GM12878 (cell line): ENCODE measurements at regions of chr12 and their contacts with region 1.

Region 1: GRCh38 chr12:7933255-7933729 is 2.7 kb downstream of the SLC2A3 start:
- DNase-seq: peak; percentile 79
- ATAC-seq: peak; percentile 92
- H3K4me3 ChIP-seq: peak overlapping the region; percentile 83
- H3K27ac ChIP-seq: peak overlapping the region; percentile 86
- H3K4me1 ChIP-seq: no peaks in the 10 kb centered on the region
- H3K27me3 ChIP-seq: no peaks in the 10 kb centered on the region
- CTCF ChIP-seq: peak; percentile 61 to 77 (median 70); a peak in 5 of 6 replicates
- EP300 ChIP-seq: no peak
- POLR2A ChIP-seq: no peak
- RAD21 ChIP-seq: peak; percentile 79

Region 2: DNA sequence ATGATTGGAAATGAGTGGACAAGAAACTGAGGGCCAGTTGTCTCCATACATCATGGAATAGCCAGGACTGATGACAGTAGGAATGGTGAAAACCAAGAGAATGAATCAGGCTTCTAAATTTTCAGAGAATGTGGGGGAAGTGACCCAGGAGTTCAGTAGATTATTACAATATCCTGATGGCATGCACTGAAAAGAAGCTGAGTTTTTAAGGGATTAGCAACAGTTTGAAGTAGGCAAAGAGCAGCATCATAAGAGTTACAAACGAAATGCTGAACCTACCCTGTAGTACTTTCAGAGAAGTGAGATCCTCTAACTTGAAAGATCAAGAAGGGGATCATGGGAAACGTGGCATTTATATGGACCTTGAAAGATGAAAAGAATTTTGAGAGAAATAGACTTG is 73.7 kb before region 1 on chr12:
- CTCF ChIA-PET with region 1: interaction called, 16 read pairs
- POLR2A ChIA-PET with region 1: interaction called, 3 read pairs
- RAD21 ChIA-PET with region 1: interaction called, 17 read pairs
- SMC1A ChIA-PET with region 1: interaction called, 5 read pairs
- in situ Hi-C with region 1: no loop called
- intact Hi-C with region 1: loop called (anchors 1 kb)
- DNase-seq: no peak
- ATAC-seq: no peak; the same call in 1 of the 3 replicates
- H3K4me3 ChIP-seq: no peak overlapping the region
- H3K27ac ChIP-seq: no peak overlapping the region
- H3K4me1 ChIP-seq: no peaks in the 10 kb centered on the region; the same call in 1 of the 2 replicates
- H3K27me3 ChIP-seq: no peaks in the 10 kb centered on the region
- CTCF ChIP-seq: no peak
- EP300 ChIP-seq: no peak
- POLR2A ChIP-seq: no peak
- RAD21 ChIP-seq: no peak

Region 3: GRCh38 chr12:7917392-7918267 is 15.7 kb before region 1 on chr12:
- CTCF ChIA-PET with region 1: interaction called, 31 read pairs
- POLR2A ChIA-PET with region 1: no interaction called
- RAD21 ChIA-PET with region 1: interaction called, 7 read pairs
- SMC1A ChIA-PET with region 1: interaction called, 4 read pairs
- in situ Hi-C with region 1: no loop called
- intact Hi-C with region 1: no loop called
- DNase-seq: no peak
- ATAC-seq: no peak
- H3K4me3 ChIP-seq: no peak overlapping the region
- H3K27ac ChIP-seq: no peak overlapping the region
- H3K4me1 ChIP-seq: no peaks in the 10 kb centered on the region
- H3K27me3 ChIP-seq: no peaks in the 10 kb centered on the region
- CTCF ChIP-seq: no peak
- EP300 ChIP-seq: no peak
- POLR2A ChIP-seq: no peak
- RAD21 ChIP-seq: no peak

Region 4: DNA sequence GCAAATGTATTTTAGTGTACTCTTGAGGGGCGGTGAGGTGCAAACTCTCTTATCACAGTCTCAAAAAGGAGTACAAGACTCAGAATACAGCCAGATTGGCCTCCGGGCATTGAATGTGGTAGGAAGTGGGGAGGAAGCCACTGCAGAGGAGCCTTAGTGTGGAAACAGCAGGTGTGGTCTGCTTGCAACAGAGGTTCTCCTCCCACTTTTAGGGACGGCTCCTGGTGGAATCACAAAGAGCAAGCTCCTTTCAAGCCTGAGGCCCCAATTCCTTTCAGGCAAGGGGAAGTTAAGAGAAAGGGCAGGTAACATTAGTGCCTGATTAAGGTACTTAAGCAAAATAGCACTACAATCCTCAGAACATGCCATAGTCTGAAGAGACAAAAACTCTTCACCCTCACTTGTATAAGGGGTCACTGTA is 26.4 kb after region 1 on chr12:
- CTCF ChIA-PET with region 1: interaction called, 191 read pairs
- POLR2A ChIA-PET with region 1: interaction called, 180 read pairs
- RAD21 ChIA-PET with region 1: interaction called, 169 read pairs
- SMC1A ChIA-PET with region 1: interaction called, 215 read pairs
- in situ Hi-C with region 1: no loop called
- intact Hi-C with region 1: loop called (anchors 1 kb)
- DNase-seq: peak; percentile 70
- ATAC-seq: peak; percentile 53
- H3K4me3 ChIP-seq: peak overlapping the region; percentile 87
- H3K27ac ChIP-seq: peak overlapping the region; percentile 71
- H3K4me1 ChIP-seq: peaks cover 18% of the 10 kb centered on the region
- H3K27me3 ChIP-seq: no peaks in the 10 kb centered on the region
- CTCF ChIP-seq: no peak
- EP300 ChIP-seq: peak in 1 of 2 experiments; percentile 30; a peak in 1 of 4 replicates
- POLR2A ChIP-seq: no peak
- RAD21 ChIP-seq: no peak

Region 5: DNA sequence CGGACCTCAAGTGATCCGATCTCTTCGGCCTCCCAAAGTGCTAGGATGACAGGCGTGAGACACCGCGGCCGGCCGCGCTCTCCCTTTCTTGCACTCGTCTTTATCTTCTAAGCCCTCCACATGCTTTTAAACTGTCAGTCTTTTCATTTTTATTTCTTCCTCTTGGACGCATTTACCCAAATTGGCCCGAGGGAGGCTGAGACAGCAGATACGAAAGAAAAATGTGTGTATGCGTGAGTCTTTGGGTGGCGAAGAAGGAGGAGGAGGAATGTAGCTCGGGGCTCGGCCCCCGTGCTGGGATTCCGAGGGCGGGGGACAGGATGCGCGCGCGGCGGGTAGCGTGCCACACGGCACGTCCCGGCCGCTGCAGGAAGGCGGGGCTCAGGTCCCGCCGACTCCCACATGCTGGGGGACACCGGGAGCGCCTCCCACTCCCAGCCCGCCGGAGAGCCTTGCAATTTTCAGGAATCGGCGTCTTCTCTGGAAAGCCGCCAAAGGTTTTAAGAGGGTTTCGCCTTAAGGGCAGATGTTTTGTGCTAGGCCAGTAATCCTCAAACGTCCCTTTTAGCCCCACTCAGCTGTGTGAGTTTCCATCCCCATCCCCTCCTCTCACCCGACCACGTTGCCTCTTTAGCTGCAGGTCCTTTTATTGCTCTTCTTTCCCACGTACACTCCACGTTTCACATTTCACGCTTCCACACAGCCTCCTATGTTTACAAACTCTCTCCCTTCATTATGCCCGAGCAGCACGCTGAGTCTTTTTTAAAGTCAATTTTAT is 37.4 kb after region 1 on chr12:
- CTCF ChIA-PET with region 1: interaction called, 191 read pairs
- POLR2A ChIA-PET with region 1: interaction called, 31 read pairs
- RAD21 ChIA-PET with region 1: interaction called, 15 read pairs
- SMC1A ChIA-PET with region 1: interaction called, 215 read pairs
- in situ Hi-C with region 1: loop called (anchors 5 kb)
- intact Hi-C with region 1: loop called (anchors 1 kb)
- DNase-seq: peak; percentile 73
- ATAC-seq: peak; percentile 98
- H3K4me3 ChIP-seq: peak overlapping the region; percentile 92
- H3K27ac ChIP-seq: peak overlapping the region; percentile 75
- H3K4me1 ChIP-seq: peaks cover 12% of the 10 kb centered on the region
- H3K27me3 ChIP-seq: no peaks in the 10 kb centered on the region
- CTCF ChIP-seq: no peak
- EP300 ChIP-seq: peak in 1 of 2 experiments; percentile 25; a peak in 2 of 4 replicates
- POLR2A ChIP-seq: peak; percentile 67
- RAD21 ChIP-seq: no peak

Region 6: DNA sequence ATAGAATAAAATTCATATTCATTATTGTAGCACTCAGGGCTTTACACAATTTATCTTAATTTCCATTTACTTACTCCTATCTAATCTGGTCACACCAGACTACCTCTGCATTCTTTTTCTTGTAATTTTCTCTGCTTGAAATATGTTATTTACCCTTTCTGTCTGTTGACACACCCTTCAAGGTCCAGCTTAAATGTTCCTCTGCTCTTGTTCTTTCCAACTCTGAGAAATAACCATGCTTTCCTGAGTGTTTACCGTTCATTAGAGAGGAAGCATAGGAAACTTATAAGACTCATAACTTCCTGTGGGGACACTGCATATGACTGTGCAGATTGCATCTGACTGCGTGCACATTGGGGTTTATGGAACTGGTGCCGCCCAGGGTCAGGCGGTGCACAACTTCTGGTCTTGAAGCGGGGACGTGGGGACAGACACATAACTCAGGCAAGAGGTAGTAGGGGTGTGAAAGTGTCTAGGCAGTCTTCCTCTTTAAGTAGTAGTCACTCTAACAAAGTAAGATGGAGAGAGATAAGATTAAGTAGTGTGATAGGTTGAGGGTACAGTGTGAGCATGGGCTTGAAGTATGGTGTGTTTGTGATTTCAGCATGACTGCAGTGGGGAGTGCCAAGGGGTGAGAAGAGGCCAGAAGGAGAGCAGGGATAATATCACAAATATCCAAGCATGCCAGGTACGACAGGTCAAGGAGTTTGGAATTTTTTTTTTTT is 56.7 kb after region 1 on chr12:
- CTCF ChIA-PET with region 1: interaction called, 141 read pairs
- POLR2A ChIA-PET with region 1: interaction called, 24 read pairs
- RAD21 ChIA-PET with region 1: interaction called, 62 read pairs
- SMC1A ChIA-PET with region 1: interaction called, 93 read pairs
- in situ Hi-C with region 1: loop called (anchors 5 kb)
- intact Hi-C with region 1: loop called (anchors 1 kb)
- DNase-seq: no peak
- ATAC-seq: peak; percentile 73
- H3K4me3 ChIP-seq: no peak overlapping the region
- H3K27ac ChIP-seq: no peak overlapping the region
- H3K4me1 ChIP-seq: peaks cover 6% of the 10 kb centered on the region
- H3K27me3 ChIP-seq: no peaks in the 10 kb centered on the region
- CTCF ChIP-seq: no peak
- EP300 ChIP-seq: no peak
- POLR2A ChIP-seq: no peak
- RAD21 ChIP-seq: no peak

Region 7: DNA sequence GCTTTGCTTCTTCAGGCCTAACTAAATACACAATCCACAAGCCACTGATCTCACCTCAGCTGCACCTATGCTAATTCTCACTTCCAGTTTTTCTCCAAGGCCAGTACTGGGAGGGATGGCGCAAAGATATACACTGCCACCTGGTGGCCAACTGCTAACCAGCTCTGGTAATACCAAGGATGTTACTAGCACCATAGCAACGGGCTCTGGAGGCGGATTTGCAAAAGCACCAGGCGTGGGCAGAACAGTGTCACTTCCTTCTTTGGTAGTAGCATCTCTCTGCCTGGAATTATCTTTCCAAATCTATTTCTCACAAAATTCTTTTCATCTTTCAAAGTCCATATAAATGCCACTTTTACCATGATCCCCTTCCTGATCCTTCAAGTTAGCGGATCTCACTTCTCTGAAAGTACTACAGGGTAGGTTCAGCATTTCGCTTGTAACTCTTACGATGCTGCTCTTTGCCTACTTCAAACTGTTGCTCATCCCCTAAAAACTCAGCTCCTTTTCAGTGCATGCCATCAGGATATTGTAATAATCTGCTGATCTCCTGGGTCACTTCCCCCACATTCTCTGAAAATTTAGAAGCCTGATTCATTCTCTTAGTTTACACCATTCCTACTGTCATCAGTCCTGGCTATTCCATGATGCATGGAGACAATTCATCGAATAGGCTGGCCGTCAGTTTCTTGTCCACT is 62.1 kb after region 1 on chr12:
- CTCF ChIA-PET with region 1: interaction called, 141 read pairs
- POLR2A ChIA-PET with region 1: interaction called, 24 read pairs
- RAD21 ChIA-PET with region 1: interaction called, 62 read pairs
- SMC1A ChIA-PET with region 1: interaction called, 93 read pairs
- in situ Hi-C with region 1: loop called (anchors 5 kb)
- intact Hi-C with region 1: loop called (anchors 1 kb)
- DNase-seq: peak; percentile 69
- ATAC-seq: peak; percentile 100
- H3K4me3 ChIP-seq: no peak overlapping the region
- H3K27ac ChIP-seq: no peak overlapping the region
- H3K4me1 ChIP-seq: peaks cover 10% of the 10 kb centered on the region
- H3K27me3 ChIP-seq: no peaks in the 10 kb centered on the region
- CTCF ChIP-seq: peak; percentile 68 to 83 (median 69)
- EP300 ChIP-seq: peak; percentile 13 to 51; a peak in 1 of 4 replicates
- POLR2A ChIP-seq: no peak
- RAD21 ChIP-seq: peak; percentile 83